Testis (tissue), 5 donors: ENCODE measurements at regions of chr5 and their contacts with region 1.

Region 1: GRCh38 chr5:169980418-169981053 is at the start of gene INSYN2B:
- DNase-seq: peak; percentile 91
- H3K4me3 ChIP-seq: no peak within 1 kb of the TSS
- H3K27ac ChIP-seq: no peak within 1 kb of the TSS
- H3K4me1 ChIP-seq: no peaks in the 10 kb centered on the region
- H3K27me3 ChIP-seq: no peaks in the 10 kb centered on the region
- CTCF ChIP-seq: peak; percentile 64 to 82 (median 65)
- POLR2A ChIP-seq: no peak
- total RNA-seq, gene INSYN2B: 0.37 to 2.3 TPM

Region 2: DNA sequence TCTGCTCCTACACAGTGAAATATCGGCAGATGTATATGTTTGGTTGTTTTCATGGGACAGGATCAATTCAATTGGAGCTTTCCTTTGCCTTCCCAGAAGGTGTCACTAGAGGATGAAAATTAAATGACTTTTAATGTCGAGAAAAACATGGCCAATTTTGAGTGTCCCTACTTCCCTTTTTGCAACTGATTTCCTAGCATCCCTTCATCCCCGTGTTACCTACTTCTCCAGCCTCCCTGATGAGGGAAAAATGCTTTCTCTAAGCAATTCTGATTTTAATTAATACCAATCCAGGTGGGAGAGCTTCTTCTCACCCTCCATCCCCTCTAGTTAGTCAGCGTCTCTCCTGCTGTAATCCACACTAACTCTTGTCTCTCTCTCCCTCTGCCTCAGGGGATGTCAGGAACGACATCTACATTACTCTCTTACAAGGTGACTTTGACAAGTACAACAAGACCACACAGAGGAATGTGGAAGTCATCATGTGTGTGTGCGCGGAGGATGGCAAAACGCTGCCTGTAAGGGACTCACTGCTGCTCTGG is 278.6 kb before region 1 on chr5:
- intact Hi-C with region 1: loop called (anchors 5 kb)
- DNase-seq: no peak
- H3K4me3 ChIP-seq: no peak overlapping the region
- H3K27ac ChIP-seq: no peak overlapping the region
- H3K4me1 ChIP-seq: no peaks in the 10 kb centered on the region
- H3K27me3 ChIP-seq: no peaks in the 10 kb centered on the region
- CTCF ChIP-seq: peak in 2 of 3 experiments; percentile 43 to 45
- POLR2A ChIP-seq: no peak

Region 3: DNA sequence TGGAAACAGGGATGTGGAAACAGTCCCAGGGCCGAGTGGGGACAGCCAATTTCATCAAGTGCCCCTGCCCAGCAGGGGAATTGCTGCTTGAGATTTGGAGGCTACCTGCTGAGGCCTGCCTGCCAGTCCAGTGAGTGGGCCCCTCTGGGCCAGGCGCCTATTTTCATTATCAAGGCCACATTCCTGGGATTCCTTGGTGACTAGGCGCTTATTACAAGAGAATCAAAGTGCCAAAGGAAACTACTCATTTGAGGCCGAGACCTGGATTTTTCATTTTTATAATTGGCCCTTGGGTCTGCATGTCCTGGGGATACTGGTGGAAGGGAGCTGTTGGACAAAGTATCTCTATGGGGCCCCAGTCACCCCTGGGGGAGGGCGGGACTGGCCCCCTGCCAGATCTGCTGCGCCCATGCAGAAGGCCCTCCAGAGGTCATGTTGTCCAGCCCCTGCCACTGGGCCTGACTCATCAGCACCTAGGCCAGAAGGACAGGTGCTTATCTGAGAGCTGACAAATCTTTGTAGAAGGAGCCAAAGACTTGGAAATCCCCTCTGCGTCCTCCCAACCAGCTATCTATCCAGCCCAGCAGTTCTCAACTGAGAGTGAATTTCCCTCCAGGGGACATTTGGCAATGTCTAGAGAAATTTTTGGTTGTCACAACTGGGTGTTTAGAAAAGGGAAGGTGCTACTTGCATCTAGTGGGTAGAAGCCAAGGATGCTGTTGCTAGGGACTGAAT is 170.7 kb after region 1 on chr5:
- intact Hi-C with region 1: no loop called
- DNase-seq: peak; percentile 55
- H3K4me3 ChIP-seq: no peak overlapping the region
- H3K27ac ChIP-seq: no peak overlapping the region
- H3K4me1 ChIP-seq: peaks cover 6% of the 10 kb centered on the region
- H3K27me3 ChIP-seq: no peaks in the 10 kb centered on the region
- CTCF ChIP-seq: no peak
- POLR2A ChIP-seq: no peak